ENCODE measurements at regions of chr1 and their contacts with region 1.

Region 1: GRCh38 chr1:44500181-44501046 is 95.4 kb downstream of the RNF220 start:
- DNase-seq: peak in 39 of 42 donors; percentile 30 to 89 (median 72)

Region 2: GRCh38 chr1:43731867-43732531 is 768.4 kb before region 1 on chr1:
- intact Hi-C with region 1: no loop called
- DNase-seq: no peak

Region 3: GRCh38 chr1:44523593-44524591 is 23.5 kb after region 1 on chr1:
- intact Hi-C with region 1: no loop called
- DNase-seq: no peak

Region 4: GRCh38 chr1:44645476-44646244 is 145.2 kb after region 1 on chr1:
- intact Hi-C with region 1: loop called (anchors 10 kb)
- DNase-seq: peak; percentile 77 to 96 (median 91)

Measured in head of caudate nucleus (tissue), 42 donors.